Common myeloid progenitor, CD34-positive (primary cell): ENCODE measurements at regions of chr20 and their contacts with region 1.

Region 1: GRCh38 chr20:59948828-59949720 is 8.9 kb downstream of the FAM217B start:
- DNase-seq: peak; percentile 69 to 88 (median 85)
- H3K4me3 ChIP-seq: peak overlapping the region in 3 of 7 experiments; percentile 23 to 54 (median 53)
- H3K27ac ChIP-seq: no peak overlapping the region
- H3K4me1 ChIP-seq: peaks cover 9 to 27% (median 16%) of the 10 kb centered on the region in 4 experiments
- H3K27me3 ChIP-seq: no peaks in the 10 kb centered on the region

Region 2: GRCh38 chr20:59903621-59904020 is 45.5 kb before region 1 on chr20:
- CTCF ChIA-PET with region 1: no interaction called
- POLR2A ChIA-PET with region 1: no interaction called
- DNase-seq: no peak
- H3K4me3 ChIP-seq: no peak overlapping the region
- H3K27ac ChIP-seq: no peak overlapping the region
- H3K4me1 ChIP-seq: no peaks in the 10 kb centered on the region
- H3K27me3 ChIP-seq: peaks cover 0 to 6% (median 0%) of the 10 kb centered on the region in 5 experiments

Region 3: GRCh38 chr20:59933849-59934596 is 15.1 kb before region 1 on chr20:
- CTCF ChIA-PET with region 1: interaction called, 22 read pairs
- POLR2A ChIA-PET with region 1: interaction called, 3 read pairs
- DNase-seq: peak; percentile 70 to 81 (median 74)
- H3K4me3 ChIP-seq: peak overlapping the region; percentile 32 to 75 (median 64)
- H3K27ac ChIP-seq: no peak overlapping the region
- H3K4me1 ChIP-seq: peaks cover 0 to 26% (median 22%) of the 10 kb centered on the region in 4 experiments
- H3K27me3 ChIP-seq: no peaks in the 10 kb centered on the region

Region 4: GRCh38 chr20:60016406-60016805 is 67.3 kb after region 1 on chr20:
- CTCF ChIA-PET with region 1: no interaction called
- POLR2A ChIA-PET with region 1: no interaction called
- DNase-seq: no peak
- H3K4me3 ChIP-seq: no peak overlapping the region
- H3K27ac ChIP-seq: no peak overlapping the region
- H3K4me1 ChIP-seq: peaks cover 0 to 12% (median 4%) of the 10 kb centered on the region in 4 experiments
- H3K27me3 ChIP-seq: no peaks in the 10 kb centered on the region